ENCODE measurements at regions of chr1 and their contacts with region 1.

Region 1: DNA sequence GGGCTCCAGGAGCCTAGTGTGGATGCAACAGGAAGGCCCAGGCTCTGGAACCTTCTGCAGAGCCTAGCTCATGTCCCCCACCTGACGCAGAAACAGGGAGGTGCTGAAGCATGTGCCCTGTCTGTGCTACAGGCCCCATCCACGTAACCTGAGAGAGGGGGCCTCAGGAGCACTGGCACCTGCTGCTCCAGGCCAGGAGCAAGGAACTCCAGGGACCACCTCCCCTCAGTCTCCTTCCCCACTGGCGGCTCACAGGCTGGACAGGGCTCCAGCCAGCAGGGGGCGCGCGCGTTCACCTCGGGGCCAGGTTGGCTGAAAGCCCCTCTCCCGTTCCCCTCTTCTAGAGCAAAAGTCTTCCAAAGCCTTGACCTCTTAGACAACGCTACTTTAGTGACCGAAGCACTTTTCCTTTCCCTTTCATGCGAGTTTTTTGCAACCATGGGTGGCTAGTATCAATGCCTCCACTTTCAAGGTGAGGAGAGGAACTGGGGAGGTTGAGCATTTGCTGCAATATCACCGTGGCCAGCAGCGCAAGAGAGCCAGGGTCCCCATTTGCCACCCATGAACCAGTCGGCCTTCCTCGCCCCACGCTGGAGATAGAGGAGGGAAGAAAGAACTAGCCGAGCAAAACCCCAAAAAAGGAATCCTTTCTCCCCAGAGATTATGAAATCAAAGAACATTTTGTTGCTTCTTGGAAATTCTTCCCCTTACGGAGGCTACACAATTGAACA is 52.4 kb upstream of the GPR157 start:
- DNase-seq: peak; percentile 42 to 71 (median 71)
- H3K4me3 ChIP-seq: peak overlapping the region in 6 of 7 experiments; percentile 39 to 76 (median 60)
- H3K27ac ChIP-seq: no peak overlapping the region
- H3K4me1 ChIP-seq: peaks cover 0 to 23% (median 20%) of the 10 kb centered on the region in 4 experiments
- H3K27me3 ChIP-seq: peaks cover 3 to 44% (median 12%) of the 10 kb centered on the region in 5 experiments

Region 2: DNA sequence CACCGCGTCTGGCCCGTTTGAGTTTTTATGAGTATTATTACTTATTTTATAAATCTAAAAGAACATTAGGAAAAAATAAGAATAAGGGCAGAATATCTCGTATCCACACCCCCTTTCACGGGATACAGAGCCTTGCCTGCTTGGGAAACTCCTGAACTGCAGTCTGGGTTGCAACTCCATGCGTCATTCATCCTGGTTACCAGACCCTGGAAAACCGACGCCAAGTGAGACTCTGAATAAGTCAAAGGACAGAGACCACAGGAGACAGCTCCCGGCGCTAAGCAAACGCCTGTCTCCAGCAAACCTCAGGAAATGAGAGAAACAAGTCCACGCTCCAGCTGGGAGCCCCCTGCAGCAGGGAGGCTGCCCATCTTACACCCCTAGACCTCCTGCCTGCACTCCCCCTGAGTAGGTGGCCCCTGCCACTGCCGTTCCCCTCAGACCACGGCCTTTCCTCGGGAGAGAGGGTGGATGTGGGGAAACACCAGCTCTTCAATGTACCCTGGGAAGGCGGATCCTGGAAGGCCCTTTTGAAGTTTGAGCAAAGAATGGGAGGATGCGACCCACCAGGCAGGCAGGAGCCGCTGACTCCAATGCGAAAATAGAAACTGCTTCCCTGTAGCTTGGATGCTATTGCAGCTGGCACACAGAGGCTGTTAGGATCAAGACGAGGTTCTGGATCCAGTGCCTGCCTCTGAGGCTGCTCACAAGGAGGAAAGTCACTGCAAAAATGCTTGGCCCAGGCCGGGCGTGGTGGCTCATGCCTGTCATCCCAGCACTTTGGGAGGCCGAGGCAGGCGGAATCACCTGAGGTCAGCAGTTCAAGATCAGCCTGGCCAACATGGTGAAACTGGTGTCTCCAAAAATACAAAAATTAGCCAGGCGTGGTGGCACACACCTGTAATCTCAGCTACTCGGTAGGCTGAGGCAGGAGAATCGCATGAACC is 14.8 kb before region 1 on chr1:
- CTCF ChIA-PET with region 1: interaction called, 13 read pairs
- POLR2A ChIA-PET with region 1: no interaction called
- DNase-seq: no peak
- H3K4me3 ChIP-seq: no peak overlapping the region
- H3K27ac ChIP-seq: no peak overlapping the region
- H3K4me1 ChIP-seq: peaks cover 0 to 10% (median 2%) of the 10 kb centered on the region in 4 experiments
- H3K27me3 ChIP-seq: no peaks in the 10 kb centered on the region

Region 3: DNA sequence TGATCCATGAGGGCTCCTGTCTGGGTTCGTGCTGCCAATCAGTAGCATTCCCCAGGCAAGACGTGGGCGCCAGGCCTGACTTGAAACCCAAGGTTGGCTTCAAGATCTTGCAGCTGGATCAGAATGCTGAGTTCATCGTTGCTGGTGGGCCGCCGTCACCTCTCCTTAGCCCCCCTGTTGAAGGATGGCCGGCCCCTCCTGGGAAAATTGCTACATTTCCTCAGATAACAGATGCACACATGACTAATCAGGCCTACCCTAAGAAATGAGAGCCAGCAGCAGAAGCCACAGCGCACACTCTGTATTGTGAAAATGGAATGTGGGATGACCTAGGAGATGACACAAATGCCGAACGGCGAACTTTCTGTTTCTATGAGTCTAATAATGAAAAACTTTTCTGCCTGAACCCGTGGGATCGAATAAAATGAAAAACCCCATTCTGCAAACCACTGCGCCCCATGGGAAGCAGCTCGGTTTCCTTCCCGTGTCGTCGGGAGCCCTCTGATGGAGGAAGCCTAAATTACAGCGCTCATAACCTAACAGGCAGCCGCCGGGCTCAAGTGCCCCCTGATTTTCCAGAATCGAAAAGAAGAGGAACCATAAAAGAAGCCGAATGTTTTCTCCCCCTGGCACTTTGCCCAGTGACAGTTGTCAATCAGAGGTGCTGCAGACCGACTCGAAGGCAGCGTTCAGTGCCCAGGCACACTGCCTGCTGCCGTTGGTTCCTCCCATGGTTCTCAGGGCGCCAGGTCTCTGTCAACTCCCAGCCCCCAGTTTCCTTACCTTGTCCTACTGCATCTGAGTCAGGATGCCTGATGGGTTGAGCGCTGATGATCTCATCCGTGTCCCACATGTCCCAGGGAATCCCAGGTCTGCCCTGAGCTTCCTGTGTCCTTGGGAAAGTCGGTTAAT is 15.0 kb after region 1 on chr1:
- CTCF ChIA-PET with region 1: interaction called, 25 read pairs
- POLR2A ChIA-PET with region 1: no interaction called
- DNase-seq: peak; percentile 66 to 81 (median 73)
- H3K4me3 ChIP-seq: peak overlapping the region in 3 of 7 experiments; percentile 13 to 33 (median 19)
- H3K27ac ChIP-seq: no peak overlapping the region
- H3K4me1 ChIP-seq: peaks cover 0 to 27% (median 16%) of the 10 kb centered on the region in 4 experiments
- H3K27me3 ChIP-seq: peaks cover 0 to 49% (median 34%) of the 10 kb centered on the region in 5 experiments

Region 4: DNA sequence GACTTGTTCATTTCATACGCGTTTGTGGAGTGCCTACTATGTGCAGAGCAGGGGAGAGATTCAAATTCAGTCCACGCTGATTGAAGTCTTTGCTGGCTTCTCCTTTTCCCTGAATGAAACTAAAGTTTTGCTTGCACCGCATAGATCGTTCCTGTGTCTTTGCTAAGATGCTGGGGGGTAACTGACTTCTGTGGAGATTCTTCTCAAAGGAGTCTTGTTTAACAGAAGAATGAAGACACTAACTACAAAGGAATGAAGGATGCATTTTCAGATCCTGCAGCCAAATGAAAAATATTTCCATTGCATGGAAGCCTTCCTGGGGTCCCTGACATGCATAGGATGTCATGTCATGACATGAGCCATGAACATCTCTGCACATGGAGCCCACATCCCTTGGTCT is 26.4 kb after region 1 on chr1:
- CTCF ChIA-PET with region 1: no interaction called
- POLR2A ChIA-PET with region 1: no interaction called
- DNase-seq: no peak
- H3K4me3 ChIP-seq: no peak overlapping the region
- H3K27ac ChIP-seq: no peak overlapping the region
- H3K4me1 ChIP-seq: peaks cover 0 to 6% (median 2%) of the 10 kb centered on the region in 4 experiments
- H3K27me3 ChIP-seq: peaks cover 4 to 32% (median 21%) of the 10 kb centered on the region in 5 experiments

Region 5: GRCh38 chr1:9350013-9350908 is 168.9 kb after region 1 on chr1:
- CTCF ChIA-PET with region 1: no interaction called
- POLR2A ChIA-PET with region 1: no interaction called
- DNase-seq: no peak
- H3K4me3 ChIP-seq: no peak overlapping the region
- H3K27ac ChIP-seq: no peak overlapping the region
- H3K4me1 ChIP-seq: no peaks in the 10 kb centered on the region
- H3K27me3 ChIP-seq: peaks cover 0 to 4% (median 0%) of the 10 kb centered on the region in 5 experiments

Region 6: GRCh38 chr1:9746211-9746610 is 564.9 kb after region 1 on chr1:
- CTCF ChIA-PET with region 1: no interaction called
- POLR2A ChIA-PET with region 1: no interaction called
- DNase-seq: no peak
- H3K4me3 ChIP-seq: no peak overlapping the region
- H3K27ac ChIP-seq: no peak overlapping the region
- H3K4me1 ChIP-seq: no peaks in the 10 kb centered on the region
- H3K27me3 ChIP-seq: no peaks in the 10 kb centered on the region

Measured in common myeloid progenitor, CD34-positive (primary cell).